ENCODE measurements at regions of chr19 and their contacts with region 1.

Region 1: DNA sequence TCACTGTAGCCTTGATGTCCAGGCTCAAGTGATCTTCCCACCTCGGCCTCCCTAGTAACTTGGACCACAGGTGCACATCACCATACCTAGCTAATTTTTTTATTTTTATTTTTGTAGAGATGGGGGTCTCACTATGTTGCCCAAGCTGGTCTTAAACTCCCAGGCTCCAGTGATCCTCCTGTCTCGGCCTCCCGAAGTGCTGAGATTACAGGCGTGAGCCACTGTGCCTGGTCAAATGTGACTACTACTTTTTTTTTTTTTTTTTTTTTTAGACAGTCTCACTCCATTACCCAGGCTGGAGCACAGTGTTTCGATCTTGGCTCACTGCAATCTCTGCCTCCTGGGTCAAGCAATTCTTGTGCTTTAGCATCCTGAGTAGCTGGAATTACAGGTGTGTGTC is 20.6 kb upstream of the COX7A1 start:
- DNase-seq: no peak
- H3K4me3 ChIP-seq: no peak overlapping the region
- H3K27ac ChIP-seq: no peak overlapping the region
- H3K4me1 ChIP-seq: peaks cover 0 to 2% (median 0%) of the 10 kb centered on the region in 3 donors
- H3K27me3 ChIP-seq: no peaks in the 10 kb centered on the region
- CTCF ChIP-seq: no peak

Region 2: GRCh38 chr19:35748106-35749020 is 424.5 kb before region 1 on chr19 and contains the start of gene LIN37:
- intact Hi-C with region 1: no loop called
- DNase-seq: peak; percentile 99 to 100 (median 99)
- H3K4me3 ChIP-seq: peak within 1 kb of the TSS; percentile 91 to 100 (median 92)
- H3K27ac ChIP-seq: peak within 1 kb of the TSS; percentile 63 to 71
- H3K4me1 ChIP-seq: peaks cover 2 to 18% (median 9%) of the 10 kb centered on the region in 3 donors
- H3K27me3 ChIP-seq: no peaks in the 10 kb centered on the region
- CTCF ChIP-seq: peak; percentile 27
- total RNA-seq, gene LIN37: 11.2 TPM

Region 3: DNA sequence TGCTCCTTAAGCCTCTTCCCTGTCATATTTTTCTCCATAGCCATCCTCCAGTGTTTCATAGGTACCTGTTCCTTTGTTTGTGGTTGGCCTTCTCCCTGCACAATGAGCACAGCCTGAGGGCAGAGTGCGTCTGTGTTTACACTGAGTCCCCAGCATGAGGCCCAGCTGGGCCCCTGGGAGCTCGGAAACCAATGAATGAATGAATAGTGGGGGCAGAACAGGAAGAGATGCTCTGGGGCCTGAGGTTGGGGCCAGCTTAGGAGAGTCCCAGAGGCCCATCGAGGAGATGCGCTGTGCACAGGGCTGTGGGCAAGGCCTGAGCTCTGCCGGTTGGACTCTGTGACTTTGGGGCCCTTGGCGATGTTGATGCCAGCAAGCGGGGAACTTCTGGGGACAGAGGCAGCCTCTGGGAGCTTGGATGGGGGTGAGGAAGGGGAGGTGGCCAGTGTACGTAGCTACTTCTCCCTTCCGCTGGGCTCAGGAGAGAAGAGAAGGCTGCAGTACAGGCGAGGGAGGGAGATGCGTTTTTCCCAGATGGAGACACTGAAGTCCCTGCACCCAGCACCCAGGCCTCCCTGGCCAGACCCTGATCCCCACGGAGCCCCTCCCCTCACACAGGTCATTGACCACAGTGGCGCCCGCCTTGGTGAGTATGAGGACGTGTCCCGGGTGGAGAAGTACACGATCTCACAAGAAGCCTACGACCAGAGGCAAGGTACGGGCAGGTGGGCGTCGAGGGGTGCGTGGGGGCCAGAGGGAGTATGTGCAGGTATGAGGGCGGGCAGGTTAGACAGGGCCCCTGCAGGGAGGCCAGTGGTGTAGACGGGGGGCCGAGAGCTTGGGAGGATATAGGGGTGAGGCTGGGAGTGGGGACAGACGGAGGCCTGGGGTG is 52.5 kb before region 1 on chr19:
- intact Hi-C with region 1: loop called (anchors 5 kb)
- DNase-seq: no peak
- H3K4me3 ChIP-seq: no peak overlapping the region
- H3K27ac ChIP-seq: no peak overlapping the region
- H3K4me1 ChIP-seq: peaks cover 0 to 8% (median 4%) of the 10 kb centered on the region in 3 donors
- H3K27me3 ChIP-seq: no peaks in the 10 kb centered on the region
- CTCF ChIP-seq: no peak

Region 4: DNA sequence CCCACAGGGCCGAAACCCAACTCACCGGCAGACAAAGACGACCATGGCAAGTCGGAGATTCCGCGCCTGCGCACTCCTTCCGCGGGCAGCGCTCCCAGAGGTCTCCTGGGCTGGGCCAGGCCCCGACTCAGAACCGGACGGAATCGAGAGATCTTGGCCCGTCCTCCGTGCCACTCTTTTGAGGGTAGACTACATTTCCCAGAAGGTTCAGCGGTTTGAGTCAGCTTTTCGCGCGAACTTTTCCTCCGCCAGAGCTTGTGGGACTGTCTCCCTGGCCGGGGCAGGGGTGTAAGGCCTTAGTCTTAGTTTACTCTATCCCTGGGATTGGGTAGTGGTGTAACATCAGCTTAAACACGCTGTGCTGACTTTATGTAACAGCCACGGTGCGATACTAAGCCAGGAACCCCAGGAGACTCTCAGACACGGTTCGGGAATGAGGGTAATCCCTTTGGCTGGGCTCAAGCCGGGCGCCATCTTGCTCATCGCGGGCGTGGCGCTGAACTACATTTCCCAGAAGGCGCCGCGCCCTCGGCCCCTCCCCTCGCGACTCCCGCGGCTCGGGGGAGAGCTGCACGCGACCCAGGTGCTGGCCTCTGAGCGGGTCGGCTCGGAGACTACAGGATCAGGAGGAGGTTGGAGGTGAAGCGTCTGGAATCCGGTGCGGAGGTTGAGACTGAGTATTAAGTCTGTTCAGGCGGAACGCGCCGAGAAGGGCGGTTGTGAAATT is 355.5 kb after region 1 on chr19 and contains the start of gene ZNF260:
- intact Hi-C with region 1: no loop called
- DNase-seq: peak; percentile 97 to 99 (median 98)
- H3K4me3 ChIP-seq: peak within 1 kb of the TSS; percentile 76 to 100 (median 95)
- H3K27ac ChIP-seq: peak within 1 kb of the TSS; percentile 96 to 98
- H3K4me1 ChIP-seq: peaks cover 0 to 11% (median 4%) of the 10 kb centered on the region in 3 donors
- H3K27me3 ChIP-seq: no peaks in the 10 kb centered on the region
- CTCF ChIP-seq: no peak
- total RNA-seq, gene ZNF260: 12.8 TPM